Tibial artery (tissue), 4 donors: ENCODE measurements at regions of chr20 and their contacts with region 1.

Region 1: GRCh38 chr20:21719592-21720214 is 14.2 kb downstream of the PAX1 start:
- DNase-seq: peak in 1 of 2 donors; percentile 67
- H3K4me3 ChIP-seq: no peak overlapping the region
- H3K27ac ChIP-seq: no peak overlapping the region
- H3K4me1 ChIP-seq: no peaks in the 10 kb centered on the region
- H3K27me3 ChIP-seq: peaks cover 0 to 20% of the 10 kb centered on the region in 2 donors
- CTCF ChIP-seq: peak; percentile 58 to 64

Region 2: GRCh38 chr20:21677731-21678130 is 42.0 kb before region 1 on chr20:
- intact Hi-C with region 1: no loop called
- DNase-seq: no peak
- H3K4me3 ChIP-seq: no peak overlapping the region
- H3K27ac ChIP-seq: no peak overlapping the region
- H3K4me1 ChIP-seq: no peaks in the 10 kb centered on the region
- H3K27me3 ChIP-seq: no peaks in the 10 kb centered on the region
- CTCF ChIP-seq: no peak

Region 3: DNA sequence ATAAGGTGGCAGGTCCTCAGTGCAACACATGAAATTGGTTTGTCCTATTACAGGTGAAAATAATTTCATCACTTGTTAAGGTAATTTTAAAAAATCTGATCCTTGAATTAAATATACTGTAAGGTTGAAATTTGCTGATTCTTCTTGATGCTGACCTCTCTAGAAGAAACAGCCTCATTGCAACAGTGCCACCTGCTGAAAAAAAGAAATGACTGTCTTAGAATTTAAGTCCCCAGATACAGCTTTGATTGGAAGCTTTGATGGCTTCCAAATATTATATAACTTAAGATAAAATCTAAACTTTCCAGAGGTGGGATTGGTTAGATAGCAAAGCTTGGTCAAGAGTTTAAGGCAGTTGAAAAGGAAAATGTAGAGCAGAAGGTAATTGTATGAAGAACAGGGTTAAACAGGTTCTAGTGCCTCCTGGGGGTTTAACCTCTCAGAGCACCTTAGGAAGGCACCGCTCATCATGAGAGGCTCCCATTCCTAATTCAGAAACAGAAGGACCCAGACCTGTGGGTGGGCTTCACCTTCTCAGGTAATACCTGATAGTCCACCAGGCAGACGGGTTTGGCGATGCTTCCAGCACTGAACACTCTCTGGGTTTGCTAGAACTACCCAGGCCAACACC is 386.7 kb after region 1 on chr20:
- intact Hi-C with region 1: loop called (anchors 10 kb)
- DNase-seq: no peak
- H3K4me3 ChIP-seq: no peak overlapping the region
- H3K27ac ChIP-seq: no peak overlapping the region
- H3K4me1 ChIP-seq: no peaks in the 10 kb centered on the region
- H3K27me3 ChIP-seq: no peaks in the 10 kb centered on the region
- CTCF ChIP-seq: peak; percentile 47 to 65